ENCODE measurements at regions of chr3 and their contacts with region 1.

Region 1: DNA sequence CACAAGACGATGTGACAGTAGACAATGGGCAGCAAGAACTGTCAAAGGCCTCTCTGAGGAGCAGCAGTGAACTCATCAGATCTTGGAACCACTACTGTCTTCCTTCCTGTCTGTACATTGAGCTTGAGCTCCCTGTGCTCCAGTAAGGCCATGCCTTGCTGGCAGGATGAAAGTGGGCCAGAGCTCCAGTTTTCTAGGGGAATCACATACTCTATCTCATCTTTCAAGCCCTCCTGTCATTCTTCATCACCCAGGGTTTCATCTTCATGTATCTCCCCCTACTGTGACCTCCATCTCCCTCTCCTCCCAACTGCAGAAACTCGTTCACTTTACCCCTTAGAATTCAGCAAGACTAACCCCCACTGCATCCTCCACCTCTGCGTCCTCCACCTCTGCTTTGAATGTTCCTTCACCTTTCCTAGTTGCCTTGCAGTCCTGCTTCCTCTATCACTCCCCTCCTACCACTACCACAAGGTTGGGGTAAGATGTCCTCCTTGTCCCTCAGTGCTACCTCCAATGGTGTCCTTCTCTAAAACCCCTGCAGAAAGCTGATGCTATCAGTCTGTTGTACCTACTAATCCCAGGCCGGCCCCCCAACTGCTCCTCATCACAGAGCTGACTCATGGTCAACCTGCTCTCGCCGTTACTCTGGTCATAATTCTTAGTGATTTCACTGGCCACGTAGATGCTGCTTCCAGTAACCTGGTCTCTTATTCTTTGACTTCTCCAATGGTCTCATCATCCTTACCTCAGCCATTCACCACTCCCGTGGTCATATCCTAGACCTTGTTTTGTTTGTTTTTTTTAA is 22.3 kb downstream of the NKIRAS1 start:
- DNase-seq: no peak
- ATAC-seq: peak; percentile 25
- H3K4me3 ChIP-seq: no peak overlapping the region
- H3K27ac ChIP-seq: no peak overlapping the region
- H3K4me1 ChIP-seq: no peaks in the 10 kb centered on the region
- H3K27me3 ChIP-seq: no peaks in the 10 kb centered on the region
- CTCF ChIP-seq: no peak
- EP300 ChIP-seq: no peak
- POLR2A ChIP-seq: peak; percentile 14
- RAD21 ChIP-seq: no peak

Region 2: DNA sequence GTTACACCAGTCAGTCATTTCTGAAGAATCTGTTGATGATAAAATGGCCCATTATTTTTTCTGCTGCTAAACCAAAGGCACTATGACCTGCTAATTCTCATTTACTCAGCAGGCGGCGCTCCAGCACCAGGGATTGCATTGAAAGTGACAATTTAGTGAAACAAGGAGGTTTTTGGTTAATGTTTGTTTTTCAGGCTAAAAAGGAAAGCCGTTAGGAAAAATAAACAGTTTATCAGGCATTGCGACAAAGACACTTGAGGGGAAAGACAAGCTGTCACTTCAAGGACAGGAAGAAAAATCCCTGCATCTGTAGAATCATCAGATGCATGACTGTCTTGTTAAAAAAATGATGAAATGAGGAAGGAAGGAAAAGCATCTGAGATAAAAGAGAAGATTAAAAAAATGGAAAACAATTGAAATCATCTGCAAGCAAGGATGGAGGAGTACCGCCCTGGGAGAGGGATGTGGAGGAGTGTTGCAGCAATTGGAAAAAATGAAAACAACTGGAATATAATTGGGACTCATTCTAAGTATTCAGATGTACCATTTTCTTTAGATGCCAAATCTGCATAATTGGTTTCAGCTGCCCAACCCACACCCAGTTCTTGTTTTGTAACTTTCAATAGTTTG is 104.7 kb after region 1 on chr3:
- CTCF ChIA-PET with region 1: interaction called, 15 read pairs
- POLR2A ChIA-PET with region 1: no interaction called
- RAD21 ChIA-PET with region 1: interaction called, 15 read pairs
- SMC1A ChIA-PET with region 1: interaction called, 6 read pairs
- in situ Hi-C with region 1: no loop called
- intact Hi-C with region 1: loop called (anchors 5 kb)
- DNase-seq: no peak
- ATAC-seq: peak; percentile 72
- H3K4me3 ChIP-seq: no peak overlapping the region
- H3K27ac ChIP-seq: no peak overlapping the region
- H3K4me1 ChIP-seq: no peaks in the 10 kb centered on the region
- H3K27me3 ChIP-seq: no peaks in the 10 kb centered on the region; a peak in 1 of 4 replicates
- CTCF ChIP-seq: peak; percentile 88 to 97 (median 96)
- EP300 ChIP-seq: no peak
- POLR2A ChIP-seq: no peak
- RAD21 ChIP-seq: peak; percentile 100

Region 3: DNA sequence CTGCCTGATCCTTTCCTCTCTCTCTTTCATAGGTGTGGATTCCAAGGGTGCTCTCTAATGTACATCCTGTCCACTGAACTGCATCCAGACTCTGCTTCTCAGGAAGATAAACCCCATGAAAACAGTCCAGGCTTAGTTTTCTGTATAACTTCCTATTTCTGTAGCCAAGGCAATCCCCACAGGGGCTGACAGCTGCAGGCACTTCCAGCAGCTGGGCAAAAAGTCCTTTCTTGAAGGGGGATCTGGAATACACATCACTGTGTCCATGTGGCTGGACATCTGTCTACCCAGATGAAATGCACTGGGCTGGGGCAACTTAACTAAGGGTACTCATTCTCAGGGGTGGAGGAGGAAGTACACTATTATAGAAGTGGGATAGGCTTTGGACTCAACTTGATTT is 122.8 kb after region 1 on chr3:
- CTCF ChIA-PET with region 1: no interaction called
- POLR2A ChIA-PET with region 1: no interaction called
- RAD21 ChIA-PET with region 1: no interaction called
- SMC1A ChIA-PET with region 1: no interaction called
- in situ Hi-C with region 1: no loop called
- intact Hi-C with region 1: no loop called
- DNase-seq: no peak
- ATAC-seq: no peak
- H3K4me3 ChIP-seq: no peak overlapping the region
- H3K27ac ChIP-seq: no peak overlapping the region
- H3K4me1 ChIP-seq: no peaks in the 10 kb centered on the region
- H3K27me3 ChIP-seq: no peaks in the 10 kb centered on the region
- CTCF ChIP-seq: no peak
- EP300 ChIP-seq: no peak
- POLR2A ChIP-seq: no peak
- RAD21 ChIP-seq: no peak

Region 4: GRCh38 chr3:24154013-24154695 is 259.7 kb after region 1 on chr3:
- CTCF ChIA-PET with region 1: interaction called, 3 read pairs
- POLR2A ChIA-PET with region 1: no interaction called
- RAD21 ChIA-PET with region 1: no interaction called
- SMC1A ChIA-PET with region 1: no interaction called
- in situ Hi-C with region 1: no loop called
- intact Hi-C with region 1: loop called (anchors 10 kb)
- DNase-seq: no peak
- ATAC-seq: peak; percentile 74
- H3K4me3 ChIP-seq: no peak overlapping the region
- H3K27ac ChIP-seq: no peak overlapping the region
- H3K4me1 ChIP-seq: no peaks in the 10 kb centered on the region
- H3K27me3 ChIP-seq: no peaks in the 10 kb centered on the region
- CTCF ChIP-seq: no peak
- EP300 ChIP-seq: peak in 1 of 2 experiments; percentile 11; a peak in 1 of 4 replicates
- POLR2A ChIP-seq: no peak
- RAD21 ChIP-seq: no peak

Measured in GM12878 (cell line).